ENCODE measurements at regions of chr13 and their contacts with region 1.

Region 1: GRCh38 chr13:49606747-49607648 is 21.3 kb upstream of the ARL11 start:
- DNase-seq: peak; percentile 66
- H3K4me3 Mint-ChIP-seq: peak overlapping the region; percentile 73
- H3K27ac Mint-ChIP-seq: peak overlapping the region; percentile 72
- H3K4me1 Mint-ChIP-seq: peaks cover 5% of the 10 kb centered on the region
- H3K27me3 Mint-ChIP-seq: peaks cover 4% of the 10 kb centered on the region

Region 2: DNA sequence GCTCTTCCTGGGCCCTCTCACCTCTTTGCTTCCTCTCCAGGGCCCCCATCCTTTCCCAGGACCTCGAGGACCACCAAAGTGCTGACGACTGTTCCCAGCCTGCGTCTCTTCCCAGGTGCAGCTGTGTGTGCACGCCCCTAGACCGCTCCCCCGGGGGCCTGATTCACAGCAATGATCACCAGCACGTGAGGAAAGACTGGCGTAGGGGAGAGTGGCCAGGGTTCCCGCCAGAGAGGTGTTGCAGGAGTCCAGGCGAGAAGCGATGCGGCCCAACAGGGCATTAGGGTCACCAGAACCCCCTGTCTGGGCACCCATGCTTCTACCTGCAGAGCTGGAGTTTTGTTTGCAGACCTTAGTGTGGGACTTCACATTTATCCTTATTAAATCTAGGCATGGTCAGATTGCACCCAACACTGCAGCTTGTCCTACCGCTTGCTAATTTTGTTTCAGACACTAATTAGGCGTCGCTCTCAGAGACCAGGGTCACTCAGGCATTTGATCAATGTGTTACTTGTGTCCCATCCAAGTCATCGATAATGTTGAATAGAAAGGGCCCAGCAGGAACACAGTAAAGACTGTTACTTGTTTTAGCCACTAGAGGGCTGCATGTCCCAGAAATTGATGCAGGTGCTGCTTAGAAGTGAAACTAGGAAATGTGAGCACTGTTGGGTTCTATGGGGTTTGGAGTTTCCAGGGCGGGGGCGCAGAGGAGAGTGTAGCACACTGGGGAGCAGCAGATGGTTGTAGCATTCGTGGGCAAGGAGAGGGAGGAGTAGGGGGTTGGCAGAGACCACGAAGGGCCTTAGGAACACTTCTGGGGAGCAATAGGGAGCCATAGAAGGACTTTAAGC is 306.0 kb before region 1 on chr13:
- intact Hi-C with region 1: loop called (anchors 1 kb)
- DNase-seq: peak; percentile 63
- H3K4me3 Mint-ChIP-seq: peak overlapping the region; percentile 24
- H3K27ac Mint-ChIP-seq: peak overlapping the region; percentile 47
- H3K4me1 Mint-ChIP-seq: peaks cover 12% of the 10 kb centered on the region
- H3K27me3 Mint-ChIP-seq: no peaks in the 10 kb centered on the region

Region 3: DNA sequence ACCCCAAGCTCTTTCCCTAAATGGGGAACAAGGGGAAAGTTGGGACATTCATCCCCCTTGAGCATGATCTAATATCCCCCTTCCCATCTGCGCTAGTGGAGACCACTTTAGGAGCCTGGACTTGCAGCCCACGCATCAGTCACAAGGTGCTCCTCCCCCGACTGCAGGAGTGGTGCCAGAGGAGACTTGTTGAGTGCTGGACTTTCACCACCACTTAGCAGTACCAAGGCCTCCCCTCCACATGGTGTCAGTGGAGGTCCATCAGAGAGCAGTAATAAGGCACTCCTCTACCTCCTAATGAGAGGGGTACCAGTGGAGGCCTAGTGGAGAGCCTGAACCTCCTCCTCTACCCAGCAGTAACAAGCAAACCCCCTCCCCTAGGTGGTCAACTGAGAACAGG is 185.6 kb before region 1 on chr13:
- intact Hi-C with region 1: loop called (anchors 1 kb)
- DNase-seq: no peak
- H3K4me3 Mint-ChIP-seq: no peak overlapping the region
- H3K27ac Mint-ChIP-seq: no peak overlapping the region
- H3K4me1 Mint-ChIP-seq: no peaks in the 10 kb centered on the region
- H3K27me3 Mint-ChIP-seq: peaks cover 3% of the 10 kb centered on the region

Region 4: GRCh38 chr13:49587311-49587847 is 19.6 kb before region 1 on chr13:
- intact Hi-C with region 1: no loop called
- DNase-seq: no peak
- H3K4me3 Mint-ChIP-seq: no peak overlapping the region
- H3K27ac Mint-ChIP-seq: no peak overlapping the region
- H3K4me1 Mint-ChIP-seq: peaks cover 26% of the 10 kb centered on the region
- H3K27me3 Mint-ChIP-seq: peaks cover 2% of the 10 kb centered on the region

Region 5: GRCh38 chr13:49655906-49656305 is 48.9 kb after region 1 on chr13:
- intact Hi-C with region 1: no loop called
- DNase-seq: no peak
- H3K4me3 Mint-ChIP-seq: no peak overlapping the region
- H3K27ac Mint-ChIP-seq: no peak overlapping the region
- H3K4me1 Mint-ChIP-seq: peaks cover 2% of the 10 kb centered on the region
- H3K27me3 Mint-ChIP-seq: no peaks in the 10 kb centered on the region